CD4-positive, alpha-beta T cell (primary cell): ENCODE measurements at regions of chr6 and their contacts with region 1.

Region 1: DNA sequence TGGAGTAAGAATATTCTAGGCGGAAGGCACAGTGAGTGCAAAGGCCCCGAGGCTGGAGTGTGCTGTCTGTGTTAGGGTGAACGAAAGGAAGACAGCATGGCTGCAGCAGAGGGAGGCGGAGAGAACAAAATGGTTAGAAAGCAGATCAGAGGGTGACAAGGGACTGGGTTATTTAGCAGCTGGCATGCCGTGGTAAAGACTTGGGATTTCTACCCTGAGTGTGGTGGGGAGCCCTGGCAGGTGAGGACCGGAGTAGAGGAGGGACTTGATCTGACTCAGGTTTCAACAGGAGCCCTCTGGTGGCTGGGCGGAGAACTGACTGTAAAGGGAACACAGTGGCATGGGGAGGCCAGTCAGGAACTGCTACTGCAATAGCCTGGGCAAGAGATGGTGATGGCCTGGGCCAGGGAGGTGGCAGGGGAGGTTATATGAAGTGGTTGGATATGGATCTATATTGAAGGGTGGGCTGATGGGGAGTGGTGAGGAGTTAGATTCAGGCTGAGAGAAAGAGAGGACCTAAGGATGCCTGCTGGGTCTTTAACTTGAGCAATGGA is 38.0 kb downstream of the PIM1 start:
- DNase-seq: peak; percentile 83 to 93 (median 89)
- ATAC-seq: peak; percentile 73
- H3K4me3 ChIP-seq: no peak overlapping the region
- H3K4me3 Mint-ChIP-seq: peak overlapping the region; percentile 26
- H3K27ac ChIP-seq: no peak overlapping the region
- H3K27ac Mint-ChIP-seq: peak overlapping the region; percentile 58
- H3K4me1 ChIP-seq: peaks cover 56% of the 10 kb centered on the region
- H3K4me1 Mint-ChIP-seq: peaks cover 50% of the 10 kb centered on the region
- H3K27me3 ChIP-seq: no peaks in the 10 kb centered on the region
- H3K27me3 Mint-ChIP-seq: no peaks in the 10 kb centered on the region
- CTCF ChIP-seq: peak; percentile 86

Region 2: GRCh38 chr6:37029249-37029971 is 178.6 kb before region 1 on chr6:
- CTCF ChIA-PET with region 1: interaction called, 15 read pairs
- POLR2A ChIA-PET with region 1: interaction called, 3 read pairs
- intact Hi-C with region 1: no loop called
- DNase-seq: peak in 5 of 14 experiments; percentile 31 to 80 (median 60)
- ATAC-seq: peak; percentile 57
- H3K4me3 ChIP-seq: no peak overlapping the region
- H3K4me3 Mint-ChIP-seq: no peak overlapping the region
- H3K27ac ChIP-seq: no peak overlapping the region
- H3K27ac Mint-ChIP-seq: no peak overlapping the region
- H3K4me1 ChIP-seq: peaks cover 16% of the 10 kb centered on the region
- H3K4me1 Mint-ChIP-seq: peaks cover 5% of the 10 kb centered on the region
- H3K27me3 ChIP-seq: no peaks in the 10 kb centered on the region
- H3K27me3 Mint-ChIP-seq: no peaks in the 10 kb centered on the region
- CTCF ChIP-seq: peak; percentile 60

Region 3: DNA sequence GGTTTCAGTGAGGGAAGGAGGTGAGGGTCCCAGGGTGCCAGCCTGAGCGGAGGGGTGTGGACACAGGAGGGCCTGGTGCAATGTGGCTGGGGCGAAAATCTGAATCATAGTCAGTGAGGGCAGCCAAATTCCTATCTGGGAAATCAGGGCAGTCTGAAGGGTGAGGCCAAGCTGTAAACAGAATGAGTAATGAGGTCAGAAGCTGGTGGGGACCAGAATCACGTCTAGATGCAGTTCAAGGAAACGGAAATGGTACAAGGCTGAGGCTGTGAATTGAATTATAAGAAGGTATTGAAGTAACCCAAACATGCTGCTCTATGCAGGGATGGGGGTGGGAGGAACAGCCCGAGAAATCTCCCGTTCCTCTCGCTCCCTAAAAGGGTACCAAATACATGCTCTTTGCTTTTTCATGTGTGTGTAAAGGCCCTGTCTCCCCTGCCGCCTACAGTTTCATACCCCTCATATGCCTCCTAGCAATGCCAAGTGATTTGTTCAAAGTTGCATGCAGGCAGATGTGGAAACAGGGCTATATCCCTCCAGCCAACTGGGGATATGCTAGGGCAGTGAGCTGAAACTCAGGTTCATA is 73.3 kb before region 1 on chr6:
- CTCF ChIA-PET with region 1: no interaction called
- POLR2A ChIA-PET with region 1: no interaction called
- intact Hi-C with region 1: no loop called
- DNase-seq: peak in 10 of 14 experiments; percentile 2 to 79 (median 10)
- ATAC-seq: peak; percentile 78
- H3K4me3 ChIP-seq: no peak overlapping the region
- H3K4me3 Mint-ChIP-seq: peak overlapping the region; percentile 28
- H3K27ac ChIP-seq: peak overlapping the region in 1 of 2 donors; percentile 72
- H3K27ac Mint-ChIP-seq: peak overlapping the region; percentile 81
- H3K4me1 ChIP-seq: peaks cover 49% of the 10 kb centered on the region
- H3K4me1 Mint-ChIP-seq: peaks cover 19% of the 10 kb centered on the region
- H3K27me3 ChIP-seq: no peaks in the 10 kb centered on the region
- H3K27me3 Mint-ChIP-seq: no peaks in the 10 kb centered on the region
- CTCF ChIP-seq: no peak

Region 4: GRCh38 chr6:37182736-37183590 is 25.0 kb before region 1 on chr6:
- CTCF ChIA-PET with region 1: interaction called, 5 read pairs
- POLR2A ChIA-PET with region 1: interaction called, 6 read pairs
- intact Hi-C with region 1: loop called in 1 of 2 experiments (anchors 1 kb)
- DNase-seq: peak; percentile 28 to 93 (median 54)
- ATAC-seq: peak; percentile 96
- H3K4me3 ChIP-seq: peak overlapping the region; percentile 20
- H3K4me3 Mint-ChIP-seq: peak overlapping the region; percentile 74
- H3K27ac ChIP-seq: peak overlapping the region; percentile 51 to 55
- H3K27ac Mint-ChIP-seq: peak overlapping the region; percentile 95
- H3K4me1 ChIP-seq: peaks cover 72% of the 10 kb centered on the region
- H3K4me1 Mint-ChIP-seq: peaks cover 61% of the 10 kb centered on the region
- H3K27me3 ChIP-seq: no peaks in the 10 kb centered on the region
- H3K27me3 Mint-ChIP-seq: no peaks in the 10 kb centered on the region
- CTCF ChIP-seq: no peak